A549 (cell line): ENCODE measurements at regions of chr5 and their contacts with region 1.

Region 1: GRCh38 chr5:168987543-168988300 is 313.2 kb downstream of the SLIT3 start:
- DNase-seq: peak; percentile 51 to 66
- ATAC-seq: peak; percentile 62 to 81
- H3K4me3 ChIP-seq: no peak overlapping the region
- H3K27ac ChIP-seq: peak overlapping the region; percentile 39 to 61; a peak in 5 of 6 replicates
- H3K4me1 ChIP-seq: peaks cover 52% of the 10 kb centered on the region
- CTCF ChIP-seq: peak; percentile 99
- EP300 ChIP-seq: no peak
- POLR2A ChIP-seq: no peak
- RAD21 ChIP-seq: peak; percentile 95 to 97

Region 2: DNA sequence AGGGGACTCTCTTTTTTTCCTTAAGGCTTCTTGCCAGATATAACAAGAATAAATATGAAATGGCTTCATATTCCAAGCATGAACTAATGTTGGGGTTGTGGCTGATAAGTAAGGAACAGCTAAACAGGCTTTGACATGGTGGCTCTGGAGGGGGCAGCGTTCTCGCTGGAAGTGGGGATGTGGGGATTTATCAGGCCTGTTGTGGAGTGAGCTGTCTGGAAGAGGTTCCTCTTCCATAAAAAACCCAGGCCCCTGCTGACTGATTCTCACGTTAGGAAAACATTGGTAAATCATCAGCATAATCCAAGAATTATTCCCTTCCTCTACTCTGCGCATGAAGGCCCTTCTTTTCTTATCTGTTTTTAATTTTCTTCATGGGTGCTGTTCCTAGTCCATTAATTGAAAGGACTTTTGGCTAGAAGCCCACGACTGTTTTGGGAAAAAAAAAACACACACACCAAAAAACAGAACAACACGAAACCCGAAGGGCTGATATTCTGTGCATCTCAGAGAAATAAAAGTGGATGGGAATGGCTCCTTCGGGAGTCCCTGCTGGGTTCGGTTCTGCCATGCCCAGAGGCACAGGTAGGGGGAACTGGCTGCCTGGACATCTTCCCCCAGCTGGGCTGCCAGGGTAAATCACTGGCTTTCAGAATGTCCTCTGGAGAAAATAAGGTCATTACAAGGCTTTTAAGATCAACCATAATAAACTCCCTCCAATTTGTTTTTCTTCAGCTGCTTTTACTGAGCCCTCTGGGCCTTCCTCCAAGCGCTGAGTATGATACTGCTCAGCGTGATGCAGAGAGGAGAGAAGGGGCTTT is 16.2 kb after region 1 on chr5:
- CTCF ChIA-PET with region 1: interaction called, 60 read pairs
- POLR2A ChIA-PET with region 1: no interaction called
- DNase-seq: peak in 1 of 2 experiments; percentile 33
- ATAC-seq: peak in 1 of 2 experiments; percentile 54; a peak in 3 of 6 replicates
- H3K4me3 ChIP-seq: no peak overlapping the region
- H3K27ac ChIP-seq: peak overlapping the region in 1 of 2 experiments; percentile 45; a peak in 2 of 6 replicates
- H3K4me1 ChIP-seq: peaks cover 38% of the 10 kb centered on the region
- CTCF ChIP-seq: no peak
- EP300 ChIP-seq: no peak
- POLR2A ChIP-seq: no peak
- RAD21 ChIP-seq: peak in 1 of 2 experiments; percentile 27; a peak in 1 of 5 replicates

Region 3: DNA sequence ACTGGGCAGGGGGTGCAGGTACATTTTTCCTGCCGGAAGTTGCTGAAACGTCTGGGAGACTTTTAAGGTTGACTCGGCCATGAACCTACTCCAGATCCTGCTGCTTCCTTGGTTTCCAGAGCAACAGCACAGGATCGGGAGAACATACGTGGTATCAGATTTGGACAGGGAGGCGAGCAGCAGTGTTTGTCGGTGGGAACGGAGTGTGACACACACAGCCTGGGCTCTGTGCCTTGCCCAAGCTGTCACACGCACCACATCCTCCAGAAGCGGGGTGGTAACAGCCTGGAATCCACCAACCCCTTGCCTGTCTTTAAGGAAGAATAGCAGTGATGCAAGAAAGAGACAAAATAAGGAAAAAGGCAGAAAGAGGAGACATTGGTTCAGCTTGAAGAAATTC is 36.7 kb after region 1 on chr5:
- CTCF ChIA-PET with region 1: interaction called, 10 read pairs
- POLR2A ChIA-PET with region 1: no interaction called
- DNase-seq: no peak
- ATAC-seq: no peak
- H3K4me3 ChIP-seq: no peak overlapping the region
- H3K27ac ChIP-seq: no peak overlapping the region
- H3K4me1 ChIP-seq: no peaks in the 10 kb centered on the region
- CTCF ChIP-seq: no peak
- EP300 ChIP-seq: no peak
- POLR2A ChIP-seq: no peak
- RAD21 ChIP-seq: no peak

Region 4: GRCh38 chr5:169197343-169197742 is 209.6 kb after region 1 on chr5:
- CTCF ChIA-PET with region 1: interaction called, 13 read pairs
- POLR2A ChIA-PET with region 1: no interaction called
- DNase-seq: peak; percentile 20 to 41
- ATAC-seq: peak in 1 of 2 experiments; percentile 76; a peak in 3 of 6 replicates
- H3K4me3 ChIP-seq: no peak overlapping the region
- H3K27ac ChIP-seq: peak overlapping the region in 1 of 2 experiments; percentile 33; a peak in 1 of 6 replicates
- H3K4me1 ChIP-seq: peaks cover 11% of the 10 kb centered on the region
- CTCF ChIP-seq: no peak
- EP300 ChIP-seq: no peak
- POLR2A ChIP-seq: no peak
- RAD21 ChIP-seq: peak; percentile 47 to 58

Region 5: DNA sequence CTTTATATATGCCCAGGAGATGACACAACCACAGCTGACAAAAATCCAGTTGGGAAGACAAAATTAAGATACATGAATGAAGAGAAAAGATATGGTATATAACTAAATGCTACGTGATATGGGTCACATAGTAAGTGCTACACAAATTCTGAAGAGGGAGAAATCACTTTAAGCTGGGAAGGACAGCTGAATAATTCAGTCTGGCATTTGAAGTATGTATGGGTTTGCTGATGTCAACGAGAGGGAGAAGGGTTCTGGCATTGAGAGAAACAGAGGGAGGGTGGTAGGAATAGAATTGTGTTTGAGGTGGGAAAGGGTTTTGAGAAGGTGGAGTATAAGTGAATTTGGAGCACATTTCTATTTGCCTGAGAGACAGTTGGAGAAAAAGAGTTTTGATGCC is 319.9 kb after region 1 on chr5:
- CTCF ChIA-PET with region 1: interaction called, 53 read pairs
- POLR2A ChIA-PET with region 1: interaction called, 12 read pairs
- DNase-seq: no peak
- ATAC-seq: no peak
- H3K4me3 ChIP-seq: no peak overlapping the region
- H3K27ac ChIP-seq: peak overlapping the region in 1 of 2 experiments; percentile 42; a peak in 1 of 6 replicates
- H3K4me1 ChIP-seq: peaks cover 14% of the 10 kb centered on the region
- CTCF ChIP-seq: no peak
- EP300 ChIP-seq: no peak
- POLR2A ChIP-seq: no peak
- RAD21 ChIP-seq: no peak

Region 6: DNA sequence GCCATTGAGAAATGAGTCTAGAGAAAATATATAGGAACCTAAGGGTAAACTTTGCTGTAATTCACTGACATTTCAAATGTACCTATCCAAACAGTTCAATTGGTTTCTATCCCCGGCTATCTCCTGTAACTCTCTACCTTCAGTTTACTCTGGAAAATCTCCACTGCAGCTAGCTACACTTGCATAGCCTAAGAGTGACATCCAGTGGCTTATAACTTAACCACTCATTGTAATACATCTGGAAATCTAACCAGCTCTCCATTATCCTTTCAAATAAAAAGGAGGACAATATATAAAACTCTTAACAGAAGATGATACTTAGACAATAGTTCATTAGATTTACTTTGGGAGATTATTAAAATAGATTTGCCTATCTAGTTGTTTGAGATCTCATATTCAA is 560.6 kb after region 1 on chr5:
- CTCF ChIA-PET with region 1: interaction called, 96 read pairs
- POLR2A ChIA-PET with region 1: no interaction called
- DNase-seq: peak; percentile 48 to 68
- ATAC-seq: peak; percentile 95 to 99
- H3K4me3 ChIP-seq: no peak overlapping the region
- H3K27ac ChIP-seq: peak overlapping the region; percentile 11 to 63; a peak in 2 of 6 replicates
- H3K4me1 ChIP-seq: peaks cover 32% of the 10 kb centered on the region
- CTCF ChIP-seq: peak; percentile 92
- EP300 ChIP-seq: no peak
- POLR2A ChIP-seq: no peak
- RAD21 ChIP-seq: peak; percentile 97 to 99

Region 7: DNA sequence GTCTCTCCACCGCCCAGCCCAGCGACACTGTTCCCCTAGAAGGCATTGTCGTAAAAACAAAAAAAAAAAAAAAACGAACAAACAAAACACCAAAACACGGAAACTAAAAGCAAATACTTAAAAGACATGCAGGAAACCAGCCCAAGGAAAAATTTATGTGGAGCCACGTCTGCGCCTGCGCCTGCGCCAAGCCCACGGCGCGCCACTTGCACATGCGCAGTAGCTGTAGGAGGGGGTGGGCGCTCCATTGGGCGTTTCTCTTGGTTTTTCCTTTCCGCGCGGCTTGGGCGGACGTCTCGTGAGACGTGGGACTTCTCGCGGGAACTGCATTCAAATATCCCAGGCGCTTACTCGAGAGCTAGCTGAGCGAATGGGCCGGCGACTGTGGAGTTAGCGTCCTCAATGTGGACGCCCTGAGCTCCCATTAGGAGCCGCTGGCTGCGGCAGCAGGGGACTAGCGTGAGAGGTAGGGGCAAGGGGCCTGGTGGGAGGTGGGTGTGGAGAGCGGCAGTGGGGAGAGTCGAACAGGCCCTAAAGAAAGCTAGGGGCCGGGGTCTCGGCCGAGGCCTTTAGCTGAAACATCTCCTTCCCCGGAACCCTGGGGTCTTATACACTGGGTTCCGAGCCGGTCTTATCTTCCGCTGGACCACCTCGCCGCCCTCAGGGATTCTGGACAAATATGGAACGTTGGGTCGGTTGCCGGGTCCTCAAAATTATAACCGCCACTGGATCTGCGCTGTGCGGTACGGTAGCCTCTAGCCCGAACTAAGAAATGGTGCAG is 595.9 kb after region 1 on chr5 and contains the start of gene SPDL1:
- CTCF ChIA-PET with region 1: interaction called, 21 read pairs
- POLR2A ChIA-PET with region 1: no interaction called
- DNase-seq: peak; percentile 81 to 97
- ATAC-seq: peak; percentile 87 to 95
- H3K4me3 ChIP-seq: peak within 1 kb of the TSS; percentile 83
- H3K27ac ChIP-seq: peak within 1 kb of the TSS; percentile 84 to 95
- H3K4me1 ChIP-seq: peaks cover 38% of the 10 kb centered on the region
- CTCF ChIP-seq: no peak
- EP300 ChIP-seq: no peak
- POLR2A ChIP-seq: peak; percentile 79
- RAD21 ChIP-seq: peak in 1 of 2 experiments; percentile 8; a peak in 1 of 5 replicates
- polyA plus RNA-seq, gene SPDL1: 62.1 and 103 TPM in 2 replicates